Activated naive CD8-positive, alpha-beta T cell treated with anti-CD3 and anti-CD28 coated beads, Interleukin-2, amount 10 ng/mL, durations not matched to agents 7 days and 5 days (primary cell): ENCODE measurements at regions of chr7 and their contacts with region 1.

Region 1: DNA sequence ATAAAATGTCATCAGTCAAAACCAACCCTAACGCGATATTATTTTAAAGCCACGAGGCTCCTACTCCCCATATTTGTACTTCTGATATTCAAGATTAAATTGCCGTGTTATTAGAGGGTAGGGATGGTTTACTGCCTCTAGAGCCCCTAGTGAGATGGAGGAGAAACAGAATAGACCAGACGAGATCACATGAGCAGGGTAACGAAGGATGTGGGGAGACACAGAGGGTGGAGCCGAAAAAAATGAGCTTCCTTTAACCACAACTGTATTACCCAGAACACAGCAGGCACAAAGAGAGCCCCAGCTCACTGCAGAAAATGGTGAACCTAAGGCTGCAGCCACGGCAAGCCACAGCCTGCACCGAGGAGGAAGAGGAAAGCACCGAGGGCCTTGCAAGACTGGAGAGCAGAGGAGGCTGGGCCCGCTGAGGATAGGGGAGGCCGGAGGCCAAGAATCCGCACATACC is 14.3 kb downstream of the ZC3HAV1 start:
- DNase-seq: peak; percentile 81
- ATAC-seq: peak; percentile 85
- H3K4me3 Mint-ChIP-seq: peak overlapping the region; percentile 86
- H3K27ac Mint-ChIP-seq: peak overlapping the region; percentile 93
- H3K4me1 Mint-ChIP-seq: peaks cover 81% of the 10 kb centered on the region
- H3K27me3 Mint-ChIP-seq: no peaks in the 10 kb centered on the region

Region 2: GRCh38 chr7:139075031-139075652 is 20.1 kb before region 1 on chr7:
- POLR2A ChIA-PET with region 1: interaction called, 32 read pairs
- DNase-seq: peak; percentile 61
- ATAC-seq: peak; percentile 60
- H3K4me3 Mint-ChIP-seq: peak overlapping the region; percentile 60
- H3K27ac Mint-ChIP-seq: peak overlapping the region; percentile 77
- H3K4me1 Mint-ChIP-seq: peaks cover 61% of the 10 kb centered on the region
- H3K27me3 Mint-ChIP-seq: no peaks in the 10 kb centered on the region

Region 3: DNA sequence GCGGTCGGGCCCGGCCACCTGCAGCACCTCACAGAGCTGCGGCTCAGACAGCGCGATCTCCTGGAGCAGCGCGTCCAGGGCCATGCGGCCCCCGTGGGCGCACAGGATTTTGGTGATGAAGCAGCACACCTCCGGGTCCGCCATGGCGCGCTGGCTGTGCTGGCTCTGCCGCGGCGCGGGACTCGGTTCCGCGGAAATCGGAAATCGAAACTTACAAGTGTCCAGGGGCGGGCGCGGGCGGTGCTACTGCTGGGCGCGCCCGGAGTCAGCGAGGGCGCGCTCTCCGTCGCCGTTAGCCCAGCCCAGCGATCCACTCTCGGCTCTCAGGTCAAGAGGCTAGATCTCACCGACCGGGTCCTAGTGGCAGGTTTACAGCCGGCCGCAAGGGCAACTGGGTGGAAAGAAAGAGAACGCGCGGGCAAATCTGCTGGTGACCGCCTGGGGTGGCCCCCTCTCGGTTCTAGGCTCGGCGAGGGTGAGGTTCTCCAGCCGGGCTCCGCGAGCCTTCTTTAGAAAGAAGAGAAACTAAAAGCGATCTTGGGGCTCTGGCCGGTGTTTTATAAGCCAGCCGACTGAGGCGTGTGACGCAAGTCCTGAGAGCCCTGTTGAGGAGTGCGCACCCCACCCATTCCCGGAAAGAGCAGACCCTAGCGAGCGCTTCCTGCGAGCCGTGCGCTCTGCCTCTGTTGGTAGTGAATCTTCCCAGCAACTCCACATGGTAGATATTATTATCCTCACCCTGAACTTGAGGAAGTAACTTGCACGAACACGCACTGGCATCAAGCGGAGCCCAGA is 14.2 kb after region 1 on chr7 and contains the start of gene ZC3HAV1:
- POLR2A ChIA-PET with region 1: interaction called, 157 read pairs
- DNase-seq: peak; percentile 86
- ATAC-seq: peak; percentile 82
- H3K4me3 Mint-ChIP-seq: peak within 1 kb of the TSS; percentile 93
- H3K27ac Mint-ChIP-seq: peak within 1 kb of the TSS; percentile 95
- H3K4me1 Mint-ChIP-seq: peaks cover 29% of the 10 kb centered on the region
- H3K27me3 Mint-ChIP-seq: no peaks in the 10 kb centered on the region
- total RNA-seq, gene ZC3HAV1: 136 TPM

Region 4: DNA sequence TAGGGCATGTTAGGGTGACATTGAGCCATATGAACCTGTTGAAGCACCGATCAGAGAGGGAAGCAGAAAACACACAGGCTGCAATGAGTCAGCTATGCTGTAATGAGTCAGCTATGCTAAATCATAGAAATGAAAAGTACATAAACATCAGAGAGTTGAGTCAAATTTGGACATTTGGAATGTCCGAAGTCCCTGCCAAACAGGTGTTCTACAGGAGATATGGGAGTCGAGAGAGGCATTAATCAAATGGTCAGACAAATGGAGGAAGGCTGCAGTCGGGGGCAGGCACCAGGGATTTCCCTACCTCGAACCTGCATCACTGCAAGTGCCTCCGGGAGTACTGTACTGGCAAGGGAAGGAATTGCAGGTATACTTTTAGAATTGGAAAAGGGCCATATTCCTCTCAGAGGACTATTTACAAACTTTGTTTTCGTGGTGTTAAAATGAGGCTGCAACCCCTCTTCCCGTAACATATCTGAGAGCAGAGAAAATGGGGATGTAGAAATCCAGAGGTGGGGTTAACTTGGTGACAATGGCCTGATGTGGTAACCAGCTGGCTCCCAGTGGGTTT is 23.1 kb after region 1 on chr7:
- POLR2A ChIA-PET with region 1: interaction called, 11 read pairs
- DNase-seq: no peak
- ATAC-seq: no peak
- H3K4me3 Mint-ChIP-seq: no peak overlapping the region
- H3K27ac Mint-ChIP-seq: peak overlapping the region; percentile 89
- H3K4me1 Mint-ChIP-seq: peaks cover 19% of the 10 kb centered on the region
- H3K27me3 Mint-ChIP-seq: no peaks in the 10 kb centered on the region

Region 5: DNA sequence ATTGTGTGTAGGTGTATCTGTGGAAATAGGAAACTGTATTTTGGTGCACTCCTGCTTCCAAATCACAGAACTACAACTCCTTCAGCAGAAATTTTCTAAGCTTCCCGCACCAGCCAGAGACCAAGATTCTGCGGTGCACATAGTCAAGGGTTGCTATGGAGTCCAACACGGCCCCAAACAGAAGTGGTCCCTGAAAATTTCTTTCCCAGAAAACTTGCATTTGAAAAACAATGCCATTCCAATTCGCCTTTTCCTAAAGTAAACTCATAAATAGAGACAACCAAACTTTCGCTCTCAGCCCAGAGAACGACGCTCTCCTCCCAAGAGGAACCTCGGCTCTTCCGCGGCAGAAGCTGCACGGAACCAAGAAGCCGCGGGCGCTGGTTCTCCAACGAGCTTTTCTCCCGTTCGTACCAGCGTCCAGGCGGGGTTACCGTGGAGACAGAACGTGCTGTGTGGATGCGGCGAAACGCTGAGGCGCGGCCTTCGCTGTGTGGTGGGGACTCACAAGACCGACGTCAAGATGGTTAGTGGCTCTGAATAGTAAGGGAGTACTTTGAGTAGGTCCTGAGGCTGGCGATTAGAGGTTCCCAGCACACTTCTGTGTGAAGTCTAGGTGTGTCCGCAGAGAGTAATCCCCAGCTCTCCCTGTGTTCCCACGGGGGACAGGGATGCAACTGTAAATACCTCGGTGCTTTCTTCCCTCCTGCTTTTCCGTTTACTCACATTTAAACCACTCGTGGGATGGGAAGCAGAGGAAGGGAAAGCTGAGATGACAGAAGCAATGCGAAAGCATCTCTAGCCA is 38.3 kb after region 1 on chr7:
- POLR2A ChIA-PET with region 1: interaction called, 17 read pairs
- DNase-seq: peak; percentile 87
- ATAC-seq: peak; percentile 96
- H3K4me3 Mint-ChIP-seq: peak overlapping the region; percentile 90
- H3K27ac Mint-ChIP-seq: peak overlapping the region; percentile 81
- H3K4me1 Mint-ChIP-seq: peaks cover 18% of the 10 kb centered on the region
- H3K27me3 Mint-ChIP-seq: peaks cover 4% of the 10 kb centered on the region

Region 6: DNA sequence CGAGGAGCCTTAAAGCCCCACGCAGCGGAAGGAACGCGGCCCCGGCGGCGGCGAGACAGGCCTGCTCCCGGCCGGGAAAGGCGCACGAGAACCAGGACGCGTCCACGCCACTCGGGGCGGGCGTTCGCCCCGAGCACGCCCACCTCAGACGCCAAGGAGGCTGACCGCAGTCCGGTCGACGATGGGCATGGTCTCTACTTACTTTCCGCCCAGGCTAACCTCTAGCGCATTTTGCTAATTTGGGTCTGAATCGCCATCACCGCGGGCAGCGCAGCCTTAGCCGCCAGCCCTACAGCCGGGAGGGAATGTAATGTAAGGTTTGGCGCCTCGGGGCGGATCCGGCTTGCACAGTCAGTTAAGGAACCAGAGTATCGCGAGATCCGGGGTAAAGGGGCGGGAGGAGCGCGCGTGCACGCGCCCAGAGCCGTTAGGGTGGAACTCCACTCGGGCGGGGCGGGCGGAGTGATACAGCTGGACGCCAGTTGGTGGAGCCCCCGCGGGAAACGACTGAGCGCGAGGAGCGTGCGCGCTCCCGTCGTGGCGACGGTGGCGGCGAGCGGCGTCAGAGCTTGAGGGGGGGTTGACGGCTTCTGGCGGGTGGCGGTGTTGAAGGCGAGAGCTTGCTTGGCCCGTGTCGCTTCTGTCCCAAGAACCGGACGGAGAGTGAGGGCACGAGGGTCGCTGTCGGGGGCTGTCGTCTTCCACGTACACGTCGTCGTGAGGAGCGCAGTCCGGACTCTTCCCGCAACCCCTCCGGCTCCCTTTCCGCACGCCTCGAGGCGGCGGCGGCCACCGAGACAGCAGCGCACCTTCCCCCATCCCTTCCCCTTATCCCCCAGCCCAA is 264.4 kb after region 1 on chr7 and contains the start of gene LUC7L2:
- POLR2A ChIA-PET with region 1: interaction called, 18 read pairs
- DNase-seq: peak; percentile 98
- ATAC-seq: peak; percentile 72
- H3K4me3 Mint-ChIP-seq: peak within 1 kb of the TSS; percentile 96
- H3K27ac Mint-ChIP-seq: peak within 1 kb of the TSS; percentile 100
- H3K4me1 Mint-ChIP-seq: peaks cover 25% of the 10 kb centered on the region
- H3K27me3 Mint-ChIP-seq: no peaks in the 10 kb centered on the region
- total RNA-seq, gene LUC7L2: 138 TPM